Left lung (tissue), 14 donors: ENCODE measurements at regions of chr6 and their contacts with region 1.

Region 1: DNA sequence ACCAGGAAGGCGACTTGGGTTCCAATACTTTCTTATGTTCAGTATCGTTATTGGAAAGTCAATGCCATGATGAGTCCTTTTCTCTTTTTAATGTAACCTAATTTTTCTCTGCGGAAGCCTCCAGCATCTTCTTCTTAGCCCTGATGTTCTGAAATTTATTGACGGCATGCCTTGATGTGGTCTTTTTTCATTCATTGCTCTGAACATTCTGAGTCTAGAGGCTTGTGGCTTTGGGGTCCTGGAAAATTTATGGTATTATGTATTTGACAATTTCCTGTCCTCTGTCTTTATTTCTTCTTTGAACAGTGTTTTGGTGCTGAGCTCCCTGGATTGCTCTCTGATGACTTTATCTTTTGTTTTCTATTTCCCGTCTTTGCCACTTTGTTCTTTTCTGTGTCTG is 28.7 kb upstream of the MAS1 start:
- DNase-seq: no peak
- ATAC-seq: no peak
- H3K4me3 ChIP-seq: no peak overlapping the region
- H3K27ac ChIP-seq: no peak overlapping the region
- H3K4me1 ChIP-seq: peaks cover 0 to 6% of the 10 kb centered on the region in 2 donors
- H3K27me3 ChIP-seq: peaks cover 0 to 5% of the 10 kb centered on the region in 2 donors
- CTCF ChIP-seq: no peak

Region 2: GRCh38 chr6:159761873-159762680 is 100.0 kb before region 1 on chr6 and contains the start of gene ACAT2:
- intact Hi-C with region 1: no loop called
- DNase-seq: peak; percentile 89 to 97 (median 96)
- ATAC-seq: peak; percentile 99
- H3K4me3 ChIP-seq: peak within 1 kb of the TSS; percentile 87 to 90
- H3K27ac ChIP-seq: peak within 1 kb of the TSS; percentile 95 to 96
- H3K4me1 ChIP-seq: peaks cover 6 to 40% of the 10 kb centered on the region in 2 donors
- H3K27me3 ChIP-seq: no peaks in the 10 kb centered on the region
- CTCF ChIP-seq: peak in 1 of 2 donors; percentile 19
- polyA plus RNA-seq, gene ACAT2: 25.2 to 37.7 (median 29.4) TPM

Region 3: GRCh38 chr6:159941286-159942113 is 79.4 kb after region 1 on chr6:
- intact Hi-C with region 1: loop called in 1 of 2 experiments (anchors 10 kb)
- DNase-seq: peak in 1 of 4 donors; percentile 38
- ATAC-seq: peak; percentile 75
- H3K4me3 ChIP-seq: no peak overlapping the region
- H3K27ac ChIP-seq: no peak overlapping the region
- H3K4me1 ChIP-seq: peaks cover 0 to 21% of the 10 kb centered on the region in 2 donors
- H3K27me3 ChIP-seq: no peaks in the 10 kb centered on the region
- CTCF ChIP-seq: peak; percentile 39 to 45

Region 4: GRCh38 chr6:161341638-161342433 is 1479.7 kb after region 1 on chr6:
- intact Hi-C with region 1: no loop called
- DNase-seq: no peak
- ATAC-seq: no peak
- H3K4me3 ChIP-seq: no peak overlapping the region
- H3K27ac ChIP-seq: no peak overlapping the region
- H3K4me1 ChIP-seq: no peaks in the 10 kb centered on the region
- H3K27me3 ChIP-seq: no peaks in the 10 kb centered on the region
- CTCF ChIP-seq: no peak